OCI-LY7 (cell line): ENCODE measurements at regions of chr1 and their contacts with region 1.

Region 1: DNA sequence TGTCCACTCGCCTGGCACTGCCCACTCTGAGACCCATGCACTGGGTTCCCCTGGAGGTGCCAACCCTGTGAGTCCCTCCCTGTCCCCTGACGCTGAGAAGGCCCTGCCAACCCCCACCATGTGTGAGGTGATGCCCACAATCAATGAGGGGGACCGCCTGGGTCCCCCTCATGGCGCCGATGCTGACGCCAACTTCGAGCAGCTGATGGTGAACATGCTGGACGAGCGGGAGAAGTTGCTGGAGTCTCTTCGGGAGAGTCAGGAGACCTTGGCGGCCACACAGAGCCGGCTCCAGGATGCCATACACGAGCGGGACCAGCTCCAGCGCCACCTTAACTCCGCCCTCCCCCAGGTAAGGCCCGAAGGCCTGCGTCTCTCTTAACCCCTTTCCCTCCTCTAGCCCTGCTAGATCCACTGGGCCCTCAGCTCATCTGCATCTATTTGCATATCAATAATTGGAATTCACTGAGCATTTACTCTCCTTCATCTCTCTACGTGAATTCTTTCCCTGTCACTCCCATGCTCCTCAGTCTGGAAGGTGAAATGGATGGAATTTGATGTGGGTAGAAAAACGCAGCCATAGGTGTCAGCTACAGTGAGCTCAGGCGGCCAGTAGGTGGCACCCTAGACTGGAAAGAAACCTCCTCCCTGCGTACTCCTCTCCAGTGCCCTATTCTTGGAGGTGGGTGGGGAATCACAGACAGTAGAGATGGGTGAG is 12.8 kb downstream of the PPFIA4 start:
- DNase-seq: peak; percentile 67
- H3K4me3 ChIP-seq: no peak overlapping the region
- H3K27ac ChIP-seq: no peak overlapping the region
- H3K4me1 ChIP-seq: peaks cover 8% of the 10 kb centered on the region
- CTCF ChIP-seq: peak; percentile 98

Region 2: DNA sequence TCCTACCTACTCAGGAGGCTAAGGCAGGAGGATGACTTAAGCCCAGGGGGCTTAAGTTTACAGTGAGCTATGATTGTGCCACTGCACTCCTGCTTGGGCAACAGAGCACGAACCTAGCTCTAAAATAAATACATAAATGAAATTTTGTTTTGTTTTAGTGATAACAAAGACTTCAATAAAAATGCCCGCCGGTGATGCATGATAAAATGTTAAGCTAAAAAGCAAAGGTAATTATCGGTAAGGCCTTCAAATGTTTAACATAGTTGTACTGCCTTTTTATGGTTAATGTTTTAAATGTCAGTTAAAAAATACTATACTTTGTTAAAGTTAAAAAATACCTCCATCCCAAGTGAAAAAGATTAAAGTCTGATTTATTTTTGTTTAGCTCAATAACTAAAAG is 257.9 kb before region 1 on chr1:
- CTCF ChIA-PET with region 1: no interaction called
- POLR2A ChIA-PET with region 1: no interaction called
- intact Hi-C with region 1: no loop called
- DNase-seq: no peak
- H3K4me3 ChIP-seq: no peak overlapping the region
- H3K27ac ChIP-seq: no peak overlapping the region
- H3K4me1 ChIP-seq: no peaks in the 10 kb centered on the region
- CTCF ChIP-seq: no peak

Region 3: GRCh38 chr1:202905331-202905730 is 133.7 kb before region 1 on chr1:
- CTCF ChIA-PET with region 1: no interaction called
- POLR2A ChIA-PET with region 1: no interaction called
- intact Hi-C with region 1: no loop called
- DNase-seq: no peak
- H3K4me3 ChIP-seq: no peak overlapping the region
- H3K27ac ChIP-seq: no peak overlapping the region
- H3K4me1 ChIP-seq: no peaks in the 10 kb centered on the region
- CTCF ChIP-seq: no peak

Region 4: DNA sequence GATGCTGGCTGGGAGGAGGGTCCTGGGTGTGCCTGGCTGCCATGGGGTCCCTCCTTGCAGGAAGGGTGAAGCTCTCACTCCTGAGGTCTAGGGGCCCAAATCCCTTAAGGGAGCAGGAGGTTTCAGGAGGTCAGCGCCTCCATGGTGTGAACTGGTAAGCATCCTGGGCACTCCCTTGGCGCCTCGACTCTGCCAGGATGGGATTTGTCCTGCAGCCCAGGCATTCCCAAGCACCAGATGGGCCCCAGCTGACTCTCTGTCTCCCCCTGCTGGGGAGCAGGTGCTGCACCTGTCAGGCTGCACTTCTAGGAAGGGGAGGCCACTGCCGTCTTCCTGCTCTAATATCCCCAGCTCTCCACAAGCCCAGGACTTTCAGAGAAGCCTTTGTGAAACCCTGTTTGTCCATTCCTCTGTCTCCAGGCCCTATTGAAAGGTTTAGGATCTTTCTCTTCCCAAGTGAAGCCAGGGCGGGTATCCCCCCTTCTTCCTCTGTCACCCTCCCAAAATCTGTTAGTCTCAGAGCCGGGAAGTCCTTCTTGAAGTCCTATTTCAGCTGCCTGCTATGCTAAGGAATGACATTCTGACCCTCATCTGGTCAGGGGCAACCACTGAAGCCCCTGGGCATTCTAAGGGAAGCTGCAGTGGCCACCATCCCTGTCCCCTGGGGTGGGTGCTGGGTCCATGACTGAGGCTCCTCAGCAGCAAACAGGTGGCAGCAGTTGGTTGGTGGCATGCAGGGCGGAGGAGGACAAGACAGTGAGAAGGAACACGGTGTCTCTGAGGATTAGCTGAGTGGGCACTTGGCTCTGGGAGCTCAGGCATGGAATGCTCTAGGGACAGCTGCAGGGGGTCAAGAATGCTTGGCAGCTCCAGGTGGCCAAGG is 133.3 kb after region 1 on chr1:
- CTCF ChIA-PET with region 1: no interaction called
- POLR2A ChIA-PET with region 1: no interaction called
- intact Hi-C with region 1: loop called (anchors 2 kb)
- DNase-seq: peak; percentile 59
- H3K4me3 ChIP-seq: no peak overlapping the region
- H3K27ac ChIP-seq: no peak overlapping the region
- H3K4me1 ChIP-seq: no peaks in the 10 kb centered on the region
- CTCF ChIP-seq: peak; percentile 80

Region 5: DNA sequence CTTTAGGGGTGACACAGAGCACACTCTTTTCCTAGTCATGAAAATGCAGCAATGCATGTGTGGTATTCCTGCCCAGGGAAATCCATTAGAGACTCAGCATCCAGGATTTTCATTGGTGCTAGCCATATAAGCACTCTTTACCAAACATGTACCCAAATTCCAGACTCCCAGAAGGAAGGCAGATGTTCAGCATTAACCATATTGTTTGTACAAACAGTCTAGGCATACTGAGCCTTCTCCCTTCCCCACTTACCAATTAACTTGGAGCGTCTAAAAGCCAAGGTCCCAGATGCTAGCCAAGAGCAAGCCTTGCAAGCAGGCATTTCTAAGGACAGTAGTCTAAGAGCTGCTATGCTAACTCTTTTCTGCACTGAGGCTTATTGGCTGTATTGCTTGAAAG is 784.3 kb after region 1 on chr1:
- CTCF ChIA-PET with region 1: no interaction called
- POLR2A ChIA-PET with region 1: no interaction called
- intact Hi-C with region 1: no loop called
- DNase-seq: no peak
- H3K4me3 ChIP-seq: no peak overlapping the region
- H3K27ac ChIP-seq: no peak overlapping the region
- H3K4me1 ChIP-seq: peaks cover 13% of the 10 kb centered on the region
- CTCF ChIP-seq: no peak